Caco-2 (cell line): ENCODE measurements at regions of chr21 and their contacts with region 1.

Region 1: DNA sequence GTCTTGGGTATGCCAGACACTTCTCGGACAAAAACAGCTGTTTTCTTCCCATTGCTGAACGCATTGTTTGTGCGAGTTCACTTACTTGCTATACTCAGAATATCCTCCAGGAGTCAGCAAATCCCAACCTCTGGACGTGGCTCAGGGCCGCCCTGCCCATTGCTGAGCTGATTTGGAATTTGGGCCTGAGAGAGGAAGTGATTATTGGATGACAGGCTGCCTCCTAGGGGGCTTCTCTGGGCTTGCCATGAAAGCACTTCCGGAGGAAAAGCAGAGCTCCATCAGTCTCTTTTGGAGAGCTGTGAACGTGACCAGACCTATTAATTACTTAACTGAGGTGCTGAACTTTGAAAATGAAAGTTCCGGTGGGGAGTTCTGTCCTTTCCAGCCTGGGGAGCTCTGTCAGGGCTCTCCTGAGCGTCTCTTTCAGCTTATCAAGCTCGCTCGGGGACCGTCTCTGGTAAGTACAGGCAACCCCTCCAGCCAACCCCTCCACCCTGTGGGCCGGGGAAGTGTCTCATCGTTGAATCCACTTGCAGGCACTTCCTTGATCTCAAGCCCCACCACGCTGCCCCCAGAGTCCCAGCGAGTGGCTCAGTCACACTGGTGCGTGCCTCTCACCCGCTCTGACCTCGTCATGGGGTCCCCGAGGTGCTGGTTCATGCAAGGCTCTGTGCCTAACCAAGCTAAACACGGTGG is 76.9 kb downstream of the CLIC6 start:
- DNase-seq: peak; percentile 71 to 83
- H3K4me3 ChIP-seq: no peak overlapping the region
- H3K4me3 Mint-ChIP-seq: no peak overlapping the region
- H3K27ac Mint-ChIP-seq: no peak overlapping the region
- H3K4me1 ChIP-seq: no peaks in the 10 kb centered on the region
- H3K4me1 Mint-ChIP-seq: no peaks in the 10 kb centered on the region
- H3K27me3 ChIP-seq: no peaks in the 10 kb centered on the region
- H3K27me3 Mint-ChIP-seq: no peaks in the 10 kb centered on the region
- CTCF ChIP-seq: peak; percentile 78 to 86

Region 2: DNA sequence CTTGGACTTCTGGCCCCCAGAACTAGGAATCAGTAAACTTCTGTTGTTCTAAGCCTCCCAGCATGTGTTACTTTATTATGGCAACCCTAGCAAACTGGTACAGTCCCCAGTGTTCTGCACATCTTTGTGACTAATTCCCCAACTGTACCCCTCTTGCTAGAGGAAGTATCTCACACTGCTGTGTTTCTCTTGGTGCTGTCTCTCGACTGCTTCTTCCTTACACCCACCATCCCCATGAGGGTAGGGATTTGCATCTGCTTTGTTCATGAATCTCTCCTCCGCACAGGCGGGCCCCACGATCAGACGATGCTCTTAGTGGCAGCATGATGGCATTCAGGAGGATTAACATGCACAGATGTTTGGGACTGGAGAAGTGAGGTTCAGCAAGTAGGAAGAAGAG is 30.2 kb before region 1 on chr21:
- CTCF ChIA-PET with region 1: no interaction called
- POLR2A ChIA-PET with region 1: no interaction called
- intact Hi-C with region 1: no loop called
- DNase-seq: no peak
- H3K4me3 ChIP-seq: no peak overlapping the region
- H3K4me3 Mint-ChIP-seq: no peak overlapping the region
- H3K27ac Mint-ChIP-seq: no peak overlapping the region
- H3K4me1 ChIP-seq: no peaks in the 10 kb centered on the region
- H3K4me1 Mint-ChIP-seq: no peaks in the 10 kb centered on the region
- H3K27me3 ChIP-seq: no peaks in the 10 kb centered on the region
- H3K27me3 Mint-ChIP-seq: no peaks in the 10 kb centered on the region
- CTCF ChIP-seq: no peak

Region 3: DNA sequence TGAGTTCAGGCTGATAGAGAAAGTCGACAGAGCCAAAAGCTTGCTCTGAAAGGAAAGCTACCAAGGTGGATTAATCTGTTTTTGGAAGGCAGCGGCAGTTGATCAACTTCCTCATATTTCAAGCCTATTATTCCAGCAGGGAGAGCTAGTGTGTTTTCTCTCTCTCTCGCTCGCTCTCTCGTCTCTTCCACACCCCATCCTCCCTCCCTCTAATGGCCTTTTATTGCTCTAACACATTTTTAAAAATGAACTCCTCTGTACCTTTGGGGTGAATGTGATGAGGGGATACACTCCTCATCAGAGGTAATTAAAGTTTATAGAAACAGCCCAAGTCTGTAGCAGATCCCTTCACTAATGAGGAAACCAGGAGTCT is 49.5 kb after region 1 on chr21:
- CTCF ChIA-PET with region 1: interaction called, 18 read pairs
- POLR2A ChIA-PET with region 1: interaction called, 3 read pairs
- intact Hi-C with region 1: no loop called
- DNase-seq: no peak
- H3K4me3 ChIP-seq: no peak overlapping the region
- H3K4me3 Mint-ChIP-seq: no peak overlapping the region
- H3K27ac Mint-ChIP-seq: peak overlapping the region; percentile 86
- H3K4me1 ChIP-seq: peaks cover 42% of the 10 kb centered on the region
- H3K4me1 Mint-ChIP-seq: peaks cover 42% of the 10 kb centered on the region
- H3K27me3 ChIP-seq: no peaks in the 10 kb centered on the region
- H3K27me3 Mint-ChIP-seq: no peaks in the 10 kb centered on the region
- CTCF ChIP-seq: peak in 1 of 2 experiments; percentile 11

Region 4: GRCh38 chr21:34974162-34974981 is 228.7 kb after region 1 on chr21:
- CTCF ChIA-PET with region 1: no interaction called
- POLR2A ChIA-PET with region 1: no interaction called
- intact Hi-C with region 1: no loop called
- DNase-seq: no peak
- H3K4me3 ChIP-seq: no peak overlapping the region
- H3K4me3 Mint-ChIP-seq: no peak overlapping the region
- H3K27ac Mint-ChIP-seq: no peak overlapping the region
- H3K4me1 ChIP-seq: no peaks in the 10 kb centered on the region
- H3K4me1 Mint-ChIP-seq: no peaks in the 10 kb centered on the region
- H3K27me3 ChIP-seq: no peaks in the 10 kb centered on the region
- H3K27me3 Mint-ChIP-seq: no peaks in the 10 kb centered on the region
- CTCF ChIP-seq: no peak

Region 5: DNA sequence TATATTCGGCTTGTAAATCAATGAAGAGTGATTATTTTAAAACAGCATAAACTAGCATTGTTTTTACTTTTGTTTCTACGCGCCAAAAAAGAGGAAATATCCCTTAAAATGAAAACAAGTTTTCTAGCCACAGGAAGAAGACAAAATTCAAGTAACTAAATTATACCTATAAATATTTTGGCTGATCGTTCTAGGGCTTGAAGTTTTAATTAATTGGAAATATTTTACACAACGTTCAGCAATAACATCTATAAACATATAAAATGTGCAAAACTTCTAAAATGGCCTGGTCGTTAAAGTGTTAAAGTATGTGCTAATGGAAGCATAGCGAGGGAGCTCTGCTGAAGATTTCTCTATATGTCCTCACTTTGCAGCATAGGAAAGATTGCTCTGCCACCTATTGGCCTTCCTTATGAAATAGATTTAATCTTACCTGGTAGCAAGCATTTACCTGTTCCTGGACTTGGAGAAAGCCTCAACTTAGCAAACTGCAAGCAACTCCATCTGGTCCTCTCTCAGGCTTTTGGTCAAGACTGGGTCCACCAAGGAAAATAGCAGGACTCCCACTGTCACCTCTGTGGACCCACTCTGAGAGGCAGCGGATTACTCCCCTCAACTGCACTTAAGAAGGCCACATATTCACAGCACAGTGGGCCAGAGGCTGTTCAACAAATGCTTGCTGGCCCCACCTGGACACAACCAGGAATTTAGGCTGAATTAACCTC is 654.7 kb after region 1 on chr21:
- CTCF ChIA-PET with region 1: interaction called, 10 read pairs
- POLR2A ChIA-PET with region 1: no interaction called
- intact Hi-C with region 1: loop called (anchors 1 kb)
- DNase-seq: peak; percentile 39 to 66
- H3K4me3 ChIP-seq: no peak overlapping the region
- H3K4me3 Mint-ChIP-seq: no peak overlapping the region
- H3K27ac Mint-ChIP-seq: no peak overlapping the region
- H3K4me1 ChIP-seq: 0 out of 2 replicates have a peak, but pooled peaks cover 4% of the 10 kb centered on the region
- H3K4me1 Mint-ChIP-seq: no peaks in the 10 kb centered on the region
- H3K27me3 ChIP-seq: no peaks in the 10 kb centered on the region
- H3K27me3 Mint-ChIP-seq: no peaks in the 10 kb centered on the region
- CTCF ChIP-seq: peak; percentile 44 to 51

Region 6: DNA sequence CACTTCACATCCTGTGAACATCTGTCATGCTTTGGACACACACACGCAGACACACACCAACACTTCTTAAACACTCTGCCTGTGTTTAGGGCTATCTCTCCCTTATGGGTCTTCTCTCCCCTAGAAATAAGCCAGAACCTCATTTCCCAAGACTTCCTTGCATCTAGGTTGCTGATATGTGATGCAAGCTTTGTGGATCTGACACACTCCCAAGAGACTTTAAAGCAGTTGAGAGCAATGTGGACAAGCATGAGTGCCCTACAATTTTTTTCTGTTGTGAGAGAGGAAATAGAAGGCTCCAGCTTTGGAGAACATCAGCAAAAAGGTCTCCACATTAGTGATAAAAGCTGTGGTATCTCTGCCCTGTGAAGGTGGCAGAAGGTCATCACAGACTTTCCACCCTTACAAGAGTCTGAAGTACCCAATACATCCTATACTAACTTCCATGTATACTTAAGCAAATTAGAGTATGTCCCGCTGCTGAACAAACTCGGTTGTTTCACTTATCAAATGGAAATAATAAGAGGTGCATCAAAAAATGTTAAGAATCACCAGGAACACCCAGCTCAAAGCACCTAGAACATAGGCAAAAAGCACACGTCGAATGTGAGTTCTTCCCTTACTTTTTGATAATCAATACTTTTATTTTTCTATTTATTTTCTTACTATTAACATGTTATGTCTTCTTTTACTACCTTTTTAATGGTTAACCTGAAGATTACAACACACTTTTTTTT is 1047.0 kb after region 1 on chr21:
- CTCF ChIA-PET with region 1: no interaction called
- POLR2A ChIA-PET with region 1: no interaction called
- intact Hi-C with region 1: no loop called
- DNase-seq: no peak
- H3K4me3 ChIP-seq: no peak overlapping the region
- H3K4me3 Mint-ChIP-seq: no peak overlapping the region
- H3K27ac Mint-ChIP-seq: no peak overlapping the region
- H3K4me1 ChIP-seq: no peaks in the 10 kb centered on the region
- H3K4me1 Mint-ChIP-seq: no peaks in the 10 kb centered on the region
- H3K27me3 ChIP-seq: no peaks in the 10 kb centered on the region
- H3K27me3 Mint-ChIP-seq: peaks cover 6% of the 10 kb centered on the region
- CTCF ChIP-seq: no peak

Region 7: GRCh38 chr21:35840197-35840799 is 1094.6 kb after region 1 on chr21:
- CTCF ChIA-PET with region 1: interaction called, 16 read pairs
- POLR2A ChIA-PET with region 1: no interaction called
- intact Hi-C with region 1: loop called (anchors 2 kb)
- DNase-seq: peak; percentile 52 to 54
- H3K4me3 ChIP-seq: no peak overlapping the region
- H3K4me3 Mint-ChIP-seq: no peak overlapping the region
- H3K27ac Mint-ChIP-seq: no peak overlapping the region
- H3K4me1 ChIP-seq: 0 out of 2 replicates have a peak, but pooled peaks cover 4% of the 10 kb centered on the region
- H3K4me1 Mint-ChIP-seq: no peaks in the 10 kb centered on the region
- H3K27me3 ChIP-seq: no peaks in the 10 kb centered on the region
- H3K27me3 Mint-ChIP-seq: no peaks in the 10 kb centered on the region
- CTCF ChIP-seq: peak; percentile 63 to 84

Region 8: GRCh38 chr21:36028127-36029069 is 1282.7 kb after region 1 on chr21:
- CTCF ChIA-PET with region 1: no interaction called
- POLR2A ChIA-PET with region 1: no interaction called
- intact Hi-C with region 1: loop called (anchors 1 kb)
- DNase-seq: peak; percentile 75 to 78
- H3K4me3 ChIP-seq: no peak overlapping the region
- H3K4me3 Mint-ChIP-seq: peak overlapping the region; percentile 35
- H3K27ac Mint-ChIP-seq: peak overlapping the region; percentile 26
- H3K4me1 ChIP-seq: peaks cover 18% of the 10 kb centered on the region
- H3K4me1 Mint-ChIP-seq: peaks cover 21% of the 10 kb centered on the region
- H3K27me3 ChIP-seq: no peaks in the 10 kb centered on the region
- H3K27me3 Mint-ChIP-seq: no peaks in the 10 kb centered on the region
- CTCF ChIP-seq: peak; percentile 80 to 93